ENCODE measurements at regions of chr7 and their contacts with region 1.

Region 1: DNA sequence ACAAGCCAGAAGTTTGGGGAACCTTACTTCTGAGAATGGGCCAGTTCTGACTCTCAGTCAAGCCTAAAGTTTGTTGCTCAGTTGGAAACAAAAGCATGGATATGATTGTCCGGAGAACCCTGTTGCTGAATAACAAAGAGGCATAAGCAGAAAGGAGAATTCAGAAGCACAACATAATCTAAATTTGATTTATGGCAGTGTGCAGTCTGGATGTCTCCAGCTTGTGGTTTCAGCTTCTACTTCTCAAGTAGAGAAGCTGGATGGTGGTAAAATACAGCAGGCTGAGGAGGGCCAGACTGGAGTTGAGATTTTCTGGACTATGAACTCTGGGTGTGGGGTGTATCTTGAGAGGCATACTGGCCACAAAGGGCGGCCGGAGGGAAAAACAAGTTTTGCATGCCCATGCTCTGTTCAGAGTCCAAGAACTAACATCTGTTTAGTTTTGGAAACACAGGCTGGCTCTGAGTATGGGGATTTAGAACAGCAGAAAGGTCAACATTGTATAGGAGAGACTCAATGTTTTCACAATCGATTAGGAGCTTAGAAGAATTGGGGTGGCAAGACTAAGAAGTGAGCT is 592.9 kb downstream of the CNTNAP2 start:
- DNase-seq: no peak
- ATAC-seq: no peak
- H3K4me3 ChIP-seq: no peak overlapping the region
- H3K4me3 Mint-ChIP-seq: no peak overlapping the region
- H3K27ac ChIP-seq: no peak overlapping the region
- H3K27ac Mint-ChIP-seq: no peak overlapping the region
- H3K4me1 ChIP-seq: no peaks in the 10 kb centered on the region
- H3K4me1 Mint-ChIP-seq: no peaks in the 10 kb centered on the region
- H3K27me3 ChIP-seq: no peaks in the 10 kb centered on the region
- H3K27me3 Mint-ChIP-seq: no peaks in the 10 kb centered on the region

Region 2: GRCh38 chr7:145431834-145432233 is 1277.7 kb before region 1 on chr7:
- CTCF ChIA-PET with region 1: no interaction called
- POLR2A ChIA-PET with region 1: no interaction called
- DNase-seq: no peak
- ATAC-seq: no peak
- H3K4me3 ChIP-seq: no peak overlapping the region
- H3K4me3 Mint-ChIP-seq: no peak overlapping the region
- H3K27ac ChIP-seq: no peak overlapping the region
- H3K27ac Mint-ChIP-seq: no peak overlapping the region
- H3K4me1 ChIP-seq: no peaks in the 10 kb centered on the region
- H3K4me1 Mint-ChIP-seq: no peaks in the 10 kb centered on the region
- H3K27me3 ChIP-seq: no peaks in the 10 kb centered on the region
- H3K27me3 Mint-ChIP-seq: no peaks in the 10 kb centered on the region

Region 3: DNA sequence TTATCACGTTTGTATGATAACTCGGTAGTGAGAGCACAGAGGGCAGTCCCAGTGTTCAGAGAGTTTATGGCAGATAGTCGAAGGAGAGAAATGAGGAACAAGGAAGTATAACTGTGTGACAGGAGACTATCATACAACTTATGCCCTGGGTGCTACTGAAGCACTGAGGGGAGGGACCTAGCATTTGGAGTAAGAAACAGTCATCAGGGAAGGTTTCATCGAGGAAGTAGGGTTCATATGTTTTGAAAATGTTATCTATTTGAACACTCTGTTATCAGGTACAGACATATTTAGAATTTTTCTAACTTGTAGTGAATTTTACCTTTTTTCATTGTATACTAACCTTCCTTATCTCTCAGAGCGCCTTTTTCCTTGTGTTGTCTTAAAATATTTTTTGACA is 666.7 kb after region 1 on chr7:
- CTCF ChIA-PET with region 1: interaction called in 1 of 2 experiments, 11 read pairs
- POLR2A ChIA-PET with region 1: no interaction called
- DNase-seq: no peak
- ATAC-seq: no peak
- H3K4me3 ChIP-seq: no peak overlapping the region
- H3K4me3 Mint-ChIP-seq: no peak overlapping the region
- H3K27ac ChIP-seq: no peak overlapping the region
- H3K27ac Mint-ChIP-seq: no peak overlapping the region
- H3K4me1 ChIP-seq: no peaks in the 10 kb centered on the region
- H3K4me1 Mint-ChIP-seq: no peaks in the 10 kb centered on the region
- H3K27me3 ChIP-seq: no peaks in the 10 kb centered on the region
- H3K27me3 Mint-ChIP-seq: no peaks in the 10 kb centered on the region

Measured in T-cell (primary cell).